AG04450 (cell line): ENCODE measurements at regions of chr6 and their contacts with region 1.

Region 1: DNA sequence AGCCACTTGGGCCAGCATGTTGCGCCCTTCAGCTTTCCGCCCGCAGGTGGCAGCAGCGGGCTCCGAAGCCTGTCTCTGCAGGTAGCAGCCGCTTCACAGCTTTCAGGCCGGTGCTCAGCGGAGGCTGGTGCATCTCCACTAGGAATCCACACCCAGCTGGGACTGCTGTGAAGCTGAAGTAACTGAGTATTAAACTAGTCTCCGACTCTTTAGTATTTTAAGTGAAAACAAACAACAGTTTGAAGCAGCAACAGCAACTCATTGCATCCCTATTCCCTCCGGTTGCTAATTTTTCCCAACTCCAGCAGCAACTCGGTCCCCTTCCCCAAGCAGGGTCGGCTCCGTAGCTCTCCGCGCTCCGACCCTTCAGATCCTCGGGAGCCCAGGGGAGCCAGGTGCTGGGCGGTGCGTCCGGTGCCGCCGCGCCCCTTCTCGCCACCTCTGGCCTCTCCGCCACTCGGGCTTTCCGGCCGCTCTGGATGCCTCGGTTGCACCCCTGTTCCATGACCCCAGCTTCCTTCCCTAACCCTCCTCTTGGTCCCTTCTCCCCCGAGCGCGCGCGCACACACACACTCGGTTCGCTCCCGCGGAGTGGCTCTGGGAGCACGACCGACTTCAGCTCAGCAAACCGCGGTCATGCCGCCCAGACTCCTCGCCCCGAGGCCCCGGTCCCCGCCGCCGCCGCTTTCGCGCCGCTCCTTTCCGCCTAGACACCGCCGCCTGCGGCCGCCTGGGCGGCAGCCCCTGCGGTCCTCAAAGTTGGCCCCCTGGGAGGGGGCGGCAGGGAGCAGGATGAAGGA is 768 bp upstream of the NKAIN2 start:
- DNase-seq: peak; percentile 34
- H3K4me3 ChIP-seq: peak overlapping the region; percentile 40
- H3K27ac ChIP-seq: no peak overlapping the region
- H3K27me3 ChIP-seq: peaks cover 11% of the 10 kb centered on the region
- CTCF ChIP-seq: peak; percentile 97

Region 2: GRCh38 chr6:123333000-123333756 is 469.7 kb before region 1 on chr6:
- CTCF ChIA-PET with region 1: no interaction called
- POLR2A ChIA-PET with region 1: no interaction called
- DNase-seq: no peak
- H3K4me3 ChIP-seq: no peak overlapping the region
- H3K27ac ChIP-seq: no peak overlapping the region
- H3K27me3 ChIP-seq: no peaks in the 10 kb centered on the region
- CTCF ChIP-seq: no peak

Region 3: GRCh38 chr6:123788319-123788718 is 14.6 kb before region 1 on chr6:
- CTCF ChIA-PET with region 1: interaction called, 12 read pairs
- POLR2A ChIA-PET with region 1: no interaction called
- DNase-seq: no peak
- H3K4me3 ChIP-seq: no peak overlapping the region
- H3K27ac ChIP-seq: no peak overlapping the region
- H3K27me3 ChIP-seq: no peaks in the 10 kb centered on the region
- CTCF ChIP-seq: no peak

Region 4: GRCh38 chr6:123913863-123914262 is 111.0 kb after region 1 on chr6:
- CTCF ChIA-PET with region 1: interaction called, 11 read pairs
- POLR2A ChIA-PET with region 1: no interaction called
- DNase-seq: no peak
- H3K4me3 ChIP-seq: no peak overlapping the region
- H3K27ac ChIP-seq: no peak overlapping the region
- H3K27me3 ChIP-seq: no peaks in the 10 kb centered on the region
- CTCF ChIP-seq: no peak

Region 5: GRCh38 chr6:123965894-123966293 is 163.0 kb after region 1 on chr6:
- CTCF ChIA-PET with region 1: interaction called, 80 read pairs
- POLR2A ChIA-PET with region 1: no interaction called
- DNase-seq: no peak
- H3K4me3 ChIP-seq: no peak overlapping the region
- H3K27ac ChIP-seq: no peak overlapping the region
- H3K27me3 ChIP-seq: no peaks in the 10 kb centered on the region
- CTCF ChIP-seq: peak; percentile 71